GM10248 (cell line): ENCODE measurements at regions of chr2 and their contacts with region 1.

Region 1: DNA sequence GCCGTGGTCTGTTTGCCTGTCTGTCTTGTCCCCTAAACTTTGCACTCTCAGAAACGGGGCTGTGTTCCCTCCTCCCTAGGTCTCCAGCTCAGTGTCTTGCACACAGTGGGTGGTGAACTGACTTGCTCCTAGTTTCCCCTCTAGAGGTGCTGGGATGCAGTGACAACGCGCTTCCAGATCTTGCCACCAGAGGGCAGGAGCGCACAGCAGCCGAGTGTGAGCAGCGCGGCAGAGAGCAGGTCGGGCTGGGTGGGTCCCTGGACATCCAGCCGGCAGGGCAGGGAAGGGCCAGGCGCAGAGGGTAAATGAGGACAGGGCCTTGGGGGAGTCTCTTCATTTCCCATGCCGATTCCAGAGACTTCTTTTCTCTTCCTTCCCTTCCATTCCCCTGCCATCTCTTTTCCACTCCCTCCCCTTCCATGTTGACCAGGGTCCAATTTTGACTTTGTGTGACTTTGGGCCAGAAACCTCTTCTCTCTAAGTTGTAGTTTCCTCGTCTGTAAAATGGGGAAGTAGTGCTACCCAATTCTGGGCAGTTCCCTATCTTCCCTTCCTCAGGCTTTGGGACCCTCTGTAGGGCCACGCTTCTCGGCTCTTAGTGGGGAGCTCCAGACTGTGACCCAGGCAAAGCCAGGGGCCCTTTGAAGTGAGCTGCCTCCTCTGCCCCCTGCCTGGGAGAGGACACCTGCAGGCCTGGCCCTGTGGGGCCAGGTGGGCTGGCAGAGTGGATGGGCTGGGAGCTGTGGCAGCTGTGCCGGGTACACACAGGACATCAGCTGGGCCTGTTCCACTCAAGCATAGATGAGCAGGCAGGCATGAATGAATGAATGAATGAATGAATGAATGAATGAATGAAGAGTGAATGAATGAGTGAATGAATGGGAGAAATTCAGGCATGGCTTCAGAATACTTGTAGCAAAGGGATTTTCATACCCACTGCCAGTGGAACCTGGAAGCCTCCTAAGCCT is 43.3 kb upstream of the TAF1B start:
- DNase-seq: peak; percentile 89
- CTCF ChIP-seq: peak; percentile 99

Region 2: GRCh38 chr2:9191041-9191481 is 608.9 kb before region 1 on chr2:
- CTCF ChIA-PET with region 1: no interaction called
- POLR2A ChIA-PET with region 1: no interaction called
- DNase-seq: no peak
- CTCF ChIP-seq: no peak

Region 3: GRCh38 chr2:9725106-9725505 is 74.8 kb before region 1 on chr2:
- CTCF ChIA-PET with region 1: no interaction called
- POLR2A ChIA-PET with region 1: no interaction called
- DNase-seq: no peak
- CTCF ChIP-seq: no peak

Region 4: DNA sequence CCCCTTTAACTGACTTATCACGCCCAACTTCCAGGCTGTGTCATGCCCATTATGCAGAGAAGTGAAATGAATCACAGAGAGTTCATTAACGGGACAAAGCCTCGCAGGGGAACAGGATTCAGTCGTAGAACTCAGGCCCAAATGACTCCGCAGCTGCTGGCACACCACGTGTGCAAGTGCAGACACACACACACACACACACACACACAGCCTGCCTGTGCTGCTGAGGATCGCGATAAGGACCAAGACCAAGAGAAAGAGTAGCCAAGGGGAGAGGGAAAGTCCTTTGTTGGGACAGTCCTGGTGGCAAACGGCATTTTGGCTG is 46.7 kb before region 1 on chr2:
- CTCF ChIA-PET with region 1: interaction called, 18 read pairs
- POLR2A ChIA-PET with region 1: no interaction called
- DNase-seq: peak; percentile 79
- CTCF ChIP-seq: no peak

Region 5: GRCh38 chr2:9770308-9771100 is 29.4 kb before region 1 on chr2:
- CTCF ChIA-PET with region 1: interaction called, 46 read pairs
- POLR2A ChIA-PET with region 1: no interaction called
- DNase-seq: peak; percentile 73
- CTCF ChIP-seq: peak; percentile 70

Region 6: GRCh38 chr2:9778012-9778411 is 21.9 kb before region 1 on chr2:
- CTCF ChIA-PET with region 1: interaction called, 46 read pairs
- POLR2A ChIA-PET with region 1: no interaction called
- DNase-seq: no peak
- CTCF ChIP-seq: peak; percentile 26

Region 7: GRCh38 chr2:9789371-9789968 is 10.5 kb before region 1 on chr2:
- CTCF ChIA-PET with region 1: interaction called, 32 read pairs
- POLR2A ChIA-PET with region 1: no interaction called
- DNase-seq: no peak
- CTCF ChIP-seq: no peak

Region 8: GRCh38 chr2:9973690-9974089 is 173.7 kb after region 1 on chr2:
- CTCF ChIA-PET with region 1: no interaction called
- POLR2A ChIA-PET with region 1: no interaction called
- DNase-seq: no peak
- CTCF ChIP-seq: no peak

Region 9: GRCh38 chr2:10043906-10044601 is 244.1 kb after region 1 on chr2:
- CTCF ChIA-PET with region 1: interaction called, 64 read pairs
- POLR2A ChIA-PET with region 1: no interaction called
- DNase-seq: peak; percentile 93
- CTCF ChIP-seq: no peak

Region 10: DNA sequence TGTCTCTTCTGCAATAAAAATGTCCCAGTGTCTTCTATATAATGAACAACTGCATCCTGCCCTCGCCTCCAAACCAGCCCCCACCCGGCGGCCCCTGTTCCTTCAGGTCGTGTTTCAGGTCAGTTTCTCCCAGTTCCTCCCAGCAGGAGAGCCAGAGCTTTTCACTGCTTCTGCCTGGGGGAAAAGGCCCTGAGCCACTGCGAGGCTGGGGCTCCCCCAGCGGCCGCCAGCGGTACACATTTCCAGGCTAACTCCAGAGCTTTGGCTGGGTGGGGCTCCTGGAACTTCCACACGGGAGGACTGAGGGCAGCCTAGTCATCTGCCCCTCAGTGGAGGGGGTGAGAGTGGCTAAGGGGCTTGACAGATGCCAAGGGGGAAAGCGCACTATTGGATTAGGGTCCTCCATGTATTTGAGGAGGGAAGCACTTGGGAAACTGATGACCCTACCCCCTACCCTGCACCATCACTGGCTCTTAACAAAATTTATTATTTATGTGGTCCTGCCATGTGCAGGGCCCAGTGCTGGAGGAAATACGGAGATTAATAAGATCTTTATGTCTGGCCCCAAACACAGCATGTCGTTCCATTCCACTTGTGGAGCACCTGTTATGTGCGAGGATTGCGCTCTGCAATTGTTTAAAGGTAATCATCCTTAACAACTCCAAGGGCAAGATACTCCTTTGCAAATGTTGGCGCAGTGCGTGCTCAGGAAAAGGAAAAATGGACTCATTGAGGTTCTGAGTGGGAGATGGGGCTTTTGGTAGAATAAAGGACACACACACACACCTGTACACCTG is 297.6 kb after region 1 on chr2:
- CTCF ChIA-PET with region 1: interaction called, 12 read pairs
- POLR2A ChIA-PET with region 1: no interaction called
- DNase-seq: peak; percentile 76
- CTCF ChIP-seq: peak; percentile 92

Region 11: DNA sequence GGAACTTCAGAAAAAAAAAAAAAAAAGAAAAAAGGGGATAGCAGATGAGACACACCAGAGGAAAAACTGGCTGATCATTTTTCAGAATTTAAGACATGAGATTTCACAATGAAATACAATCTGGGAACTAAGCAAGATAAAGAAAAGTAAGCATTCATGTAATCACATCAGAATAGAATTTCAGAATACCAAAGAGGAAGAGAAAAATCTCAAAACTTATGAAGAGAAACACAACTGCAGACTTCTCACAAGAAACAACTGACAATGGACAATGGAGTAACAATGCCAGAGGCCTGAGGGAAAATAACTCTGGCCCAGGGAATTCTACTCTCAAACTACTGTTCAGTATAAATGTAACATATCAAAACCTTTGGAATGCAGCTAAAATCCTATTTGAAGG is 309.4 kb after region 1 on chr2:
- CTCF ChIA-PET with region 1: no interaction called
- POLR2A ChIA-PET with region 1: no interaction called
- DNase-seq: no peak
- CTCF ChIP-seq: no peak